ENCODE measurements at regions of chr16 and their contacts with region 1.

Region 1: GRCh38 chr16:58499615-58500351 is at the start of gene NDRG4:
- DNase-seq: no peak
- H3K4me3 ChIP-seq: peak within 1 kb of the TSS; percentile 32 to 40
- H3K27ac ChIP-seq: no peak within 1 kb of the TSS
- H3K4me1 ChIP-seq: peaks cover 24% of the 10 kb centered on the region
- H3K27me3 ChIP-seq: no peaks in the 10 kb centered on the region
- CTCF ChIP-seq: no peak
- POLR2A ChIP-seq: no peak
- total RNA-seq, gene NDRG4: 128 TPM

Region 2: DNA sequence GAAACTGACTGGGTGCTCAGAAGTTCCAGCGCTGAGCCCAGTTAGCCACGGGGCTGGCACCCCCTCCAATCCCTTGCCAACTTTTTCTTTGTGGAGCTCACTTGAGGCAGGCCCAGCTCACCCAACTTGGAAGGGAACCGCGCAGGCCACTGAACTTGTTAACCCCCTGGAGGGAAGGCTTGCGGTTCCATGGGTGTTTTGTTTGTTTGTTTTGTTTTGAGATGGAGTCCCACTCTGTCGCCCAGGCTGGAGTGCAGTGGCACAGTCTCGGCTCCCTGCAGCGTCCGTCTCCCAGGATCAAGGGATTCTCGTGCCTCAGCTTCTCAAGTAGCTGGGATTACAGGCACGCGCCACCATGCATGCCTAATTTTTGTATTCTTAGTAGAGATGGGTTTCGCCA is 34.0 kb before region 1 on chr16:
- intact Hi-C with region 1: loop called (anchors 1 kb)
- DNase-seq: no peak
- H3K4me3 ChIP-seq: peak overlapping the region in 1 of 2 donors; percentile 48
- H3K27ac ChIP-seq: peak overlapping the region; percentile 74
- H3K4me1 ChIP-seq: peaks cover 22% of the 10 kb centered on the region
- H3K27me3 ChIP-seq: no peaks in the 10 kb centered on the region
- CTCF ChIP-seq: no peak
- POLR2A ChIP-seq: no peak

Region 3: GRCh38 chr16:58515125-58515870 is 15.5 kb after region 1 on chr16 and contains the start of gene SETD6:
- intact Hi-C with region 1: no loop called
- DNase-seq: peak; percentile 92 to 96
- H3K4me3 ChIP-seq: peak within 1 kb of the TSS; percentile 86 to 96
- H3K27ac ChIP-seq: peak within 1 kb of the TSS; percentile 42
- H3K4me1 ChIP-seq: peaks cover 20% of the 10 kb centered on the region
- H3K27me3 ChIP-seq: no peaks in the 10 kb centered on the region
- CTCF ChIP-seq: no peak
- POLR2A ChIP-seq: peak in 1 of 2 donors; percentile 9
- total RNA-seq, gene SETD6: 79.1 TPM

Region 4: DNA sequence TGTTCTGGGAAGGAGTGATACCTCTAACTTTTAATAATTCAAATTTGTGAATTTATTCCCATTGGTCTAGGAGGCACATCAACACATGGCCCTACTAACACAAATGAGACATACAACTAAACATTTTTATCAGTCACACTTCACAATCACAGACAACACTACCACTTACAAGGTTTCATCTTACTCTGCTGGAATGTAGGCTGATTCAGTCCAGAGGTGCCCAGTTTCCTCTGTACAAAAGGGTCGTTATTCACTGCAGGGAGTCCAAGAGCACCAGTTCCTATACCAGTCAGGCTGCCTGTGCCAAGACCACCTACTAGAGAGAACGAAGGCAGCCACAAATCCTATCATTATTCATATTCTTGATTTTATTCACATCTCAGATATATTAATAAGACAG is 56.9 kb after region 1 on chr16:
- intact Hi-C with region 1: no loop called
- DNase-seq: no peak
- H3K4me3 ChIP-seq: no peak overlapping the region
- H3K27ac ChIP-seq: no peak overlapping the region
- H3K4me1 ChIP-seq: no peaks in the 10 kb centered on the region
- H3K27me3 ChIP-seq: no peaks in the 10 kb centered on the region
- CTCF ChIP-seq: no peak
- POLR2A ChIP-seq: no peak

Measured in vagina (tissue), 2 donors.